Activated CD8-positive, alpha-beta T cell treated with anti-CD3 and anti-CD28 coated beads, Interleukin-2, amount 10 ng/mL, durations not matched to agents 7 days and 5 days (primary cell): ENCODE measurements at regions of chr16 and their contacts with region 1.

Region 1: DNA sequence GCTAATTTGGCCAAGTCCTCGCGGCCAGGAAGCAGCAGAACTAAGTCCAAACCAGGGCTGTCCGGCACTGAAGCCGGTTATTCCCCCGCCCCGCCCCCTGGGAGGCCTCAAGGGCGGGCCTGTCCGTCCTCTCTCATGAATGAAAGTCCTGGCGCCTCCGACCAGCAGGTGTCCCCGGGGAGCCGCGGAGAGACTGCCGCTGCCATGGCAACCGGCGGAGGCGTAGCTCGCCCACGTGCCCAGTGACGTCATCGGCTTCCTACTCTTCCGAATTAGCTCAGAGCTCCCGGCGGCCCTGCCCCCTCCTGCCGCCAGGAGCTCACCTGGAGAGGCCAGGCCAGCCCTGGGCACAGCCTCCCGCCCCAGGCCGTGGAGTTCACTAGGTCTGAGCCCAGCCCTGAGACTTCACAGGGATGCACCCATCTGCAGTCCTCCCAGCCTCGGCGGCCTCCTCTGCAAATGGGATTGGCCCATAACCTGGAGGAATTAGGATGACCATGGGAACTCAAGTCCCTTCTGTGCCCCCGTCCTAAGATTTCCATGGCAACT is 1.3 kb downstream of the SPATA2L start:
- DNase-seq: peak; percentile 97
- ATAC-seq: peak; percentile 32
- H3K4me3 Mint-ChIP-seq: peak overlapping the region; percentile 76
- H3K27ac Mint-ChIP-seq: peak overlapping the region; percentile 77
- H3K4me1 Mint-ChIP-seq: peaks cover 39% of the 10 kb centered on the region
- H3K27me3 Mint-ChIP-seq: no peaks in the 10 kb centered on the region

Region 2: GRCh38 chr16:89637379-89637778 is 62.8 kb before region 1 on chr16:
- CTCF ChIA-PET with region 1: no interaction called
- POLR2A ChIA-PET with region 1: no interaction called
- DNase-seq: no peak
- ATAC-seq: no peak
- H3K4me3 Mint-ChIP-seq: no peak overlapping the region
- H3K27ac Mint-ChIP-seq: no peak overlapping the region
- H3K4me1 Mint-ChIP-seq: peaks cover 9% of the 10 kb centered on the region
- H3K27me3 Mint-ChIP-seq: no peaks in the 10 kb centered on the region

Region 3: DNA sequence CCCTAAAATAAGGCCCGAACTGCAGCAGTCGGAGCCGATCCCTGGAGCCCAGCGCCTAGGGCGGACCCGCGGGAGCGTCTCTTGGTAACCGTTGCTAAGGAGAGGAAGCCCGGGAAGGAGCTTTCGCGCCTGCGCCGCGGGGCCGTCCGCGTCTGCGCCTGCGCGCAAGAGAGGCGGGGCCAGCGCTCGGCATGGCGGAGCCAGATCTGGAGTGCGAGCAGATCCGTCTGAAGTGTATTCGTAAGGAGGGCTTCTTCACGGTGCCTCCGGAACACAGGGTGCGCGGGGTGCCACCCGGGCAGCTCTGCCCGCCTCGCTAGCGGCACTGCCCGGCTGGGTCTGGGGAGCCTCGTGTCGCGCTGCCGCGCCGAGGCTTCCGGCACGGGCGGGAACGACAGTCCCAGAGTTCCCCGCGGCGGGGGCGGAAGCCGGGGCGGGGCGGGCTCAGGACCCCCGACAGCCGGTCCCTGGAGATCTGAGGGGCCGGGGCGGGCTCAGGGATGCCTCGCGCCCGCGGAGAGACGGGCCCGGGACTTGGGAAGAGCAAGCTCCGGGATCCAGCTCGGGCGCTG is 13.6 kb before region 1 on chr16 and contains the start of gene CDK10:
- CTCF ChIA-PET with region 1: interaction called, 27 read pairs
- POLR2A ChIA-PET with region 1: interaction called, 4 read pairs
- DNase-seq: peak; percentile 91
- ATAC-seq: peak; percentile 90
- H3K4me3 Mint-ChIP-seq: peak within 1 kb of the TSS; percentile 91
- H3K27ac Mint-ChIP-seq: peak within 1 kb of the TSS; percentile 93
- H3K4me1 Mint-ChIP-seq: peaks cover 20% of the 10 kb centered on the region
- H3K27me3 Mint-ChIP-seq: no peaks in the 10 kb centered on the region
- total RNA-seq, gene CDK10: 76.0 to 77.1 TPM

Region 4: DNA sequence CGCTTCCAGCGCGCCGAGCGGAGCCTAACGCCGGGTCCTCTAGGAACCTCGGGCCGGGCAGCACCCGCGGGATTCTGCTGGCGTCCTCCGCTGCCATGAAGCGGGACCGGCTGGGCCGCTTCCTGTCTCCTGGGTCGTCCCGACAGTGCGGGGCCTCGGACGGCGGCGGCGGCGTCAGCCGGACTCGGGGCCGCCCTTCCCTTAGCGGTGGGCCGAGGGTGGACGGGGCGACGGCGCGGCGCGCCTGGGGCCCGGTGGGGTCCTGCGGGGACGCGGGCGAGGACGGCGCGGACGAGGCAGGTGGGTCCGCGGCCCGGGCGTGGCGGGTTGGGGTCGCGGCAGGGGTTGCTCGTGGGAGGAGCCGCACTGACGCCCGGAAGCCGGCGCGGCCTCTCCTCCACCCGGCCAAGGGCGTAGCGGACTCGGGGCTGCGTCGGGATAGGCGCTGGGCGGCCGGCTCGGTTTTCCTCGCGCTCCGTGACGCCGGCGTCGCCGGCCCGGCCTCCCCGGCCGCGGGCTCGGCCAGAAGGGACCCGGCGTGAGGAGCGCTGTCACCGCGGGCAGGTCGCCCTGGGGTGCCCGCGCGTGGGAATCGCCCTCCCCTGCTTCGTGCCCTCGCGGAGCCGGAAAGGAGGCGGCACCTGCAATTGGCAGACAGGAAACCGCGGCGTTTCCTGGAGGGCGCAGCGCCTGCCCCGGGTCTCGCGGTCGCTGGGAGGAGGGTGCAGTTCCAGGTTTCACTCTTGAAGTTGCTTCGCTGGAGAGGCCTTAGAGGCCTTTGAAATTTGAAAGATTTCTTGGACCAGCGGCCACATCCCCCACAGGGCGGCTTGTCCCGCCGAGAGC is 21.6 kb after region 1 on chr16:
- CTCF ChIA-PET with region 1: interaction called, 35 read pairs
- POLR2A ChIA-PET with region 1: interaction called, 10 read pairs
- DNase-seq: peak; percentile 91
- ATAC-seq: peak; percentile 40
- H3K4me3 Mint-ChIP-seq: peak overlapping the region; percentile 93
- H3K27ac Mint-ChIP-seq: peak overlapping the region; percentile 98
- H3K4me1 Mint-ChIP-seq: peaks cover 40% of the 10 kb centered on the region
- H3K27me3 Mint-ChIP-seq: no peaks in the 10 kb centered on the region

Region 5: GRCh38 chr16:89761304-89761922 is 61.2 kb after region 1 on chr16:
- CTCF ChIA-PET with region 1: interaction called, 13 read pairs
- POLR2A ChIA-PET with region 1: no interaction called
- DNase-seq: no peak
- ATAC-seq: peak; percentile 31
- H3K4me3 Mint-ChIP-seq: peak overlapping the region; percentile 78
- H3K27ac Mint-ChIP-seq: peak overlapping the region; percentile 87
- H3K4me1 Mint-ChIP-seq: peaks cover 36% of the 10 kb centered on the region
- H3K27me3 Mint-ChIP-seq: no peaks in the 10 kb centered on the region

Region 6: GRCh38 chr16:89791278-89791995 is 91.3 kb after region 1 on chr16:
- CTCF ChIA-PET with region 1: interaction called, 116 read pairs
- POLR2A ChIA-PET with region 1: no interaction called
- DNase-seq: no peak
- ATAC-seq: no peak
- H3K4me3 Mint-ChIP-seq: no peak overlapping the region
- H3K27ac Mint-ChIP-seq: no peak overlapping the region
- H3K4me1 Mint-ChIP-seq: peaks cover 13% of the 10 kb centered on the region
- H3K27me3 Mint-ChIP-seq: no peaks in the 10 kb centered on the region

Region 7: GRCh38 chr16:89873972-89874689 is 174.0 kb after region 1 on chr16:
- CTCF ChIA-PET with region 1: interaction called, 12 read pairs
- POLR2A ChIA-PET with region 1: interaction called, 7 read pairs
- DNase-seq: peak; percentile 97
- ATAC-seq: peak; percentile 78
- H3K4me3 Mint-ChIP-seq: peak overlapping the region; percentile 89
- H3K27ac Mint-ChIP-seq: peak overlapping the region; percentile 99
- H3K4me1 Mint-ChIP-seq: peaks cover 19% of the 10 kb centered on the region
- H3K27me3 Mint-ChIP-seq: no peaks in the 10 kb centered on the region